Activated CD8-positive, alpha-beta T cell treated with anti-CD3 and anti-CD28 coated beads, Interleukin-2, amount 10 ng/mL, durations not matched to agents 7 days and 5 days (primary cell): ENCODE measurements at regions of chr12 and their contacts with region 1.

Region 1: GRCh38 chr12:47032644-47033043 is 46.8 kb upstream of the PCED1B start:
- DNase-seq: peak; percentile 38
- ATAC-seq: no peak
- H3K4me3 Mint-ChIP-seq: no peak overlapping the region
- H3K27ac Mint-ChIP-seq: no peak overlapping the region
- H3K4me1 Mint-ChIP-seq: peaks cover 11% of the 10 kb centered on the region
- H3K27me3 Mint-ChIP-seq: peaks cover 2% of the 10 kb centered on the region

Region 2: DNA sequence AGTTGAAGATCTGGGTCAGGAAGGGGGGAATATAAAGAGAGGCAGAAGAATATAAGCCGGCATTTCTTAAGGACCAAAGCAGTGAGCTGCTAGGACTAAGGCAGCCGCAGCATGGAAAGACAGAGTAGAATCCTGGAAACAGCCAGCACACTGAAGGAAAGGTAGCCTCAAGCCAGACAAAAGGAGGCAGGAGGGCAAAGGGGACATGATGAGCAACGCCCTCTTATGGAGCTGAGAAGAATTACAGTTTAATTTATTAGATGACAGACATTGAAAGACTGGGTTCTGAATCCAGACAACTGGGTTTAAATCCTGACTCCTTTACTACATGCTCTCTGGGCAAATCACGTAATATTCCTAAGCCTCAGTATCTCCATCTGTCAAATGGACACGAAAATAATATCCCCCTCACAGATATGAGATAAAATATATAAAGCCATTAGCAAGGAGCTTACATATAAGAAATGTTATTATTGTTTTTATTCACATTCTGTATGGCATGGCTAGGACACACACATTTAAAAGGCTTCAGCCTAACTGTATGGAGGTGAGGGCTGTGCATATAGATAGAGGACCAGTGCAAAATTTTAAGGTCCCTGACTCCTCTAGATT is 38.7 kb after region 1 on chr12:
- CTCF ChIA-PET with region 1: interaction called, 59 read pairs
- POLR2A ChIA-PET with region 1: no interaction called
- DNase-seq: no peak
- ATAC-seq: peak; percentile 42
- H3K4me3 Mint-ChIP-seq: no peak overlapping the region
- H3K27ac Mint-ChIP-seq: no peak overlapping the region
- H3K4me1 Mint-ChIP-seq: peaks cover 11% of the 10 kb centered on the region
- H3K27me3 Mint-ChIP-seq: no peaks in the 10 kb centered on the region

Region 3: GRCh38 chr12:47207340-47207717 is 174.7 kb after region 1 on chr12:
- CTCF ChIA-PET with region 1: interaction called, 18 read pairs
- POLR2A ChIA-PET with region 1: interaction called, 3 read pairs
- DNase-seq: peak; percentile 77
- ATAC-seq: peak; percentile 70
- H3K4me3 Mint-ChIP-seq: peak overlapping the region; percentile 83
- H3K27ac Mint-ChIP-seq: peak overlapping the region; percentile 91
- H3K4me1 Mint-ChIP-seq: peaks cover 75% of the 10 kb centered on the region
- H3K27me3 Mint-ChIP-seq: no peaks in the 10 kb centered on the region

Region 4: GRCh38 chr12:47307680-47308399 is 275.2 kb after region 1 on chr12:
- CTCF ChIA-PET with region 1: interaction called, 24 read pairs
- POLR2A ChIA-PET with region 1: interaction called, 3 read pairs
- DNase-seq: peak; percentile 76
- ATAC-seq: peak; percentile 92
- H3K4me3 Mint-ChIP-seq: peak overlapping the region; percentile 64
- H3K27ac Mint-ChIP-seq: peak overlapping the region; percentile 77
- H3K4me1 Mint-ChIP-seq: peaks cover 59% of the 10 kb centered on the region
- H3K27me3 Mint-ChIP-seq: no peaks in the 10 kb centered on the region

Region 5: DNA sequence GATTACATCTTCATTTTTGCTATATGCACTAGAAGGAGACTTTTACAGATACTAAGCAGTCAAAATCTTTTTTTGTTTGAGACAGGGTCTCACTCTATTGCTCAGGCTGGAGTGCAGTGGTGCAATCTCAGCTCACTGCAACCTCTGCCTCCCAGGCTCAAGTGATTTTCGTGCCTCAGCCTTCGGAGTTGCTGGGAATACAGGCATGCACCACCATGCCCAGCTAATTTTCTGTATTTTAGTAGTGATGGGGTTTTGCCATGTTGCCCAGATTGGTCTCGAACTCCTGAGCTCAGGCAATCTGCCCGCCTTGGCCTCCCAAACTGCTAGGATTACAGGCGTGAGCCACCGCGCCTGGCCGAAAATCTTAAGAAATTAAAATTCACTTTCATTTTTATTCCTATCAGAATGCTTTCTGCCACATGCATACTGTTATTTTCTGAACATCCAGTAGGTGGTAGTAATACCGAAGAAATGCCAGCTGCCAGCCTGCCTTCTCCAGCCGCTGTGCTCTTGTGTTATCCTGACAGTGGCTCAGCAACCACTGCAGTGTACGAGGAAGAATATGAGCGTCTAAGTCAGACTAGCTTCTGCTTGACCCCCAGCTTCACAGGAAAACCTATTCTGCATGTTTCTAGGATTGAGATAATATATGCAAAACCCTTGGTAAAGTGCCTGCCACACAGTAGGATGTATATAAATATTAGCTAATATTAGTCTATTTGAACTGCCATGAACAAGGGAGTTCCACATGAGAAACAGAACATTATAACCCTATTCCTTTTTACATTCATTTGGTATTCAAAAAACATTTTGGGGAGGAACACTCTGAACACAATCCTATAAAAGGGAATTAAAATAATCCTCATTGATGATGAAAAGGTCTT is 619.0 kb after region 1 on chr12:
- CTCF ChIA-PET with region 1: interaction called, 11 read pairs
- POLR2A ChIA-PET with region 1: no interaction called
- DNase-seq: peak; percentile 65
- ATAC-seq: peak; percentile 89
- H3K4me3 Mint-ChIP-seq: no peak overlapping the region
- H3K27ac Mint-ChIP-seq: peak overlapping the region; percentile 39
- H3K4me1 Mint-ChIP-seq: peaks cover 12% of the 10 kb centered on the region
- H3K27me3 Mint-ChIP-seq: no peaks in the 10 kb centered on the region

Region 6: GRCh38 chr12:47767216-47767724 is 734.6 kb after region 1 on chr12:
- CTCF ChIA-PET with region 1: interaction called, 10 read pairs
- POLR2A ChIA-PET with region 1: no interaction called
- DNase-seq: peak; percentile 85
- ATAC-seq: peak; percentile 87
- H3K4me3 Mint-ChIP-seq: no peak overlapping the region
- H3K27ac Mint-ChIP-seq: no peak overlapping the region
- H3K4me1 Mint-ChIP-seq: peaks cover 28% of the 10 kb centered on the region
- H3K27me3 Mint-ChIP-seq: peaks cover 7% of the 10 kb centered on the region